ENCODE measurements at regions of chr17 and their contacts with region 1.

Region 1: GRCh38 chr17:40461732-40462342 is 18.6 kb downstream of the IGFBP4 start:
- DNase-seq: no peak
- ATAC-seq: no peak
- H3K4me3 ChIP-seq: no peak overlapping the region
- H3K4me3 Mint-ChIP-seq: no peak overlapping the region
- H3K27ac ChIP-seq: no peak overlapping the region
- H3K27ac Mint-ChIP-seq: no peak overlapping the region
- H3K4me1 ChIP-seq: no peaks in the 10 kb centered on the region
- H3K4me1 Mint-ChIP-seq: no peaks in the 10 kb centered on the region
- H3K27me3 ChIP-seq: no peaks in the 10 kb centered on the region
- H3K27me3 Mint-ChIP-seq: no peaks in the 10 kb centered on the region

Region 2: DNA sequence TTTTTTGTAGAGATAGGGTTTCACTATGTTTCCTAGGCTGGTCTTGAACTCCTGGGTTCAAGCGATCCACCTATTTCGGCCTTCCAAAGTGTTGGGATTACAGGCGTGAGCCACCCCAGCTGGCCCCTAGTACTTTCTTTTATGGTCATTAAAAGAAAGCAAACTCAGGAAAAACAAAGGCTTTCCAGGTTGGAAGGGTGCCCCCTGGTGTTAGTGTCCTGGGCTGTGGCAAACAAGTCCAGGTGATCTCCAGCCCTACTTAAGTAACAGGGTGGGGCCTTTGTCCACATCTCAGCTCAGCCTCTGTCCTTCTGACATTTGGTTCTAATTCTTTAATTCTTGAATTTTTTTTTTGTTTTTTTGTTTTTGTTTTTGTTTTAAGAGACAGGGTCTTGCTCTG is 11.7 kb before region 1 on chr17:
- CTCF ChIA-PET with region 1: no interaction called
- POLR2A ChIA-PET with region 1: no interaction called
- DNase-seq: peak in 11 of 35 experiments; percentile 17 to 58 (median 32)
- ATAC-seq: no peak
- H3K4me3 ChIP-seq: no peak overlapping the region
- H3K4me3 Mint-ChIP-seq: no peak overlapping the region
- H3K27ac ChIP-seq: no peak overlapping the region
- H3K27ac Mint-ChIP-seq: no peak overlapping the region
- H3K4me1 ChIP-seq: peaks cover 2 to 24% of the 10 kb centered on the region in 2 experiments
- H3K4me1 Mint-ChIP-seq: peaks cover 19 to 32% (median 23%) of the 10 kb centered on the region in 3 donors
- H3K27me3 ChIP-seq: peaks cover 0 to 19% of the 10 kb centered on the region in 2 experiments
- H3K27me3 Mint-ChIP-seq: peaks cover 1 to 3% of the 10 kb centered on the region in 2 donors

Region 3: DNA sequence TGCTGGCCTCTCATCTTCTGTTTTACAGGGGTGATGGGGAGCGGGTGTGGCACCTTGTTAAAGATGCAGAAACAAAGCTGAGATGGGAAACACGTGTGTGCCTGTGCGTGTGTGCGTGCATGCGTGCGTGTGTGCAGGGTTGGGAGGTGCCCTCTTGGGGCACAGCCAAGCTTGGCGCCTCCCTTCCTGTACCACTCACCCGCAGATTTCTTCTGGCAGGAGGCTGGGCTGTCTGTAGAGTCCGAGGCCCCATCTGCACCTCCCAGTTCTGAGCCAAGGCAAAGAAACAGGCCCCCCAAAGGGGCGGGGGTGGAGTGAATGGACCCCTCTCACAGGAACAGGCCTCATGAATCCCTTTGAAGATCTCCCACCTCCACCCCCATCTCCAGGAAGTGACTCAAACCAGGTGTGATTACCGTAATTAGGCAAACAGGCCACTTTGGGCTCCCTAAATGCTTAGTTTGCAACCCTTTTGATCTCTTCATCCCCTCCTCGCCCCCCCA is 18.7 kb after region 1 on chr17:
- CTCF ChIA-PET with region 1: interaction called in 1 of 2 experiments, 11 read pairs
- POLR2A ChIA-PET with region 1: no interaction called
- DNase-seq: peak; percentile 73 to 95 (median 88)
- ATAC-seq: peak; percentile 88 to 92 (median 91)
- H3K4me3 ChIP-seq: peak overlapping the region in 1 of 2 donors; percentile 9
- H3K4me3 Mint-ChIP-seq: peak overlapping the region; percentile 36 to 68 (median 60)
- H3K27ac ChIP-seq: peak overlapping the region; percentile 99
- H3K27ac Mint-ChIP-seq: peak overlapping the region; percentile 94 to 98
- H3K4me1 ChIP-seq: peaks cover 15 to 86% of the 10 kb centered on the region in 2 experiments
- H3K4me1 Mint-ChIP-seq: peaks cover 59 to 80% (median 59%) of the 10 kb centered on the region in 3 donors
- H3K27me3 ChIP-seq: peaks cover 0 to under 1% of the 10 kb centered on the region in 2 experiments
- H3K27me3 Mint-ChIP-seq: no peaks in the 10 kb centered on the region

Measured in T-cell (primary cell).